ENCODE measurements at regions of chr11 and their contacts with region 1.

Region 1: DNA sequence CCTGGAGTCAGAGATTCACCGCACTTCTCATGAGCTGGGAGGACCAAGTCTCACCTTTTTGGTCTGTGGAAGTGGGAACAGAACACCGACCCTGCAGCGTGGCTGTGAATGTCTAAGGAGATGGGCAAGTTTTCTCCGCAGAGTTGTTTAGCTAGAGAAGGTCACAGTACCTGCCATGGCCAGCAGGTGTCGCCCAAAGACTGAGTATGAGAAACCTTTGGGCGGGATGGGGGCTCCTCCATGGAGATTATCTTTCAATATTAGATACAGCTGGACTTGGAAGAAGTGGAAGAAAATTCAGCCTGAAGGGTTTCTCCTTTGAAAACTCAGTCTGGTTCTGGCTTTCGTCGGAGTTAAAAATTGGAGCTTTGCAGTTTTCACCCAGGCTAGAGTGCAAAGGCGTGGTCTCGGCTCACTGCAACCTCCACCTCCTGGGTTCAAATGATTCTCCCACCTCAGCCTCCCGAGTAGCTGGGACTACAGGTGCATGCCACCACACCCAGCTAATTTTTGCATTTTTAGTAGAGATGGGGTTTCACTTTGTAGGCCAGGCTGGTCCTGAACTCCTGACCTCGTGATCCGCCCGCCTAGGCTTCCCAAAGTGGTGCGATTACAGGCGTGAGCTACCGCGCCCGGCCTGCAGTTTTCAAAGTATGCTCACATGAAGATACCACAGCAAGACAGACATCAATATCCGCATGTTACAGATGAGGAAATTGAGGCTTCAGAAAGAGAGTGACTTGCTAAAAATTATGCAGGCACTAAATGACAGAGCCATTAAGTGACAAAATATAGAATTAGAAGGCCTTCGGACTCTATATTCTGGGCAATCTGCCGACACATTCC is 10.7 kb upstream of the DSCAML1 start:
- DNase-seq: peak; percentile 48 to 54
- ATAC-seq: peak in 1 of 2 experiments; percentile 57; a peak in 3 of 6 replicates
- H3K4me3 ChIP-seq: no peak overlapping the region
- H3K27ac ChIP-seq: no peak overlapping the region; a peak in 1 of 6 replicates
- H3K4me1 ChIP-seq: peaks cover 13% of the 10 kb centered on the region; the same call in 2 of the 3 replicates
- CTCF ChIP-seq: peak; percentile 71
- EP300 ChIP-seq: no peak
- POLR2A ChIP-seq: no peak
- RAD21 ChIP-seq: peak; percentile 71 to 76

Region 2: DNA sequence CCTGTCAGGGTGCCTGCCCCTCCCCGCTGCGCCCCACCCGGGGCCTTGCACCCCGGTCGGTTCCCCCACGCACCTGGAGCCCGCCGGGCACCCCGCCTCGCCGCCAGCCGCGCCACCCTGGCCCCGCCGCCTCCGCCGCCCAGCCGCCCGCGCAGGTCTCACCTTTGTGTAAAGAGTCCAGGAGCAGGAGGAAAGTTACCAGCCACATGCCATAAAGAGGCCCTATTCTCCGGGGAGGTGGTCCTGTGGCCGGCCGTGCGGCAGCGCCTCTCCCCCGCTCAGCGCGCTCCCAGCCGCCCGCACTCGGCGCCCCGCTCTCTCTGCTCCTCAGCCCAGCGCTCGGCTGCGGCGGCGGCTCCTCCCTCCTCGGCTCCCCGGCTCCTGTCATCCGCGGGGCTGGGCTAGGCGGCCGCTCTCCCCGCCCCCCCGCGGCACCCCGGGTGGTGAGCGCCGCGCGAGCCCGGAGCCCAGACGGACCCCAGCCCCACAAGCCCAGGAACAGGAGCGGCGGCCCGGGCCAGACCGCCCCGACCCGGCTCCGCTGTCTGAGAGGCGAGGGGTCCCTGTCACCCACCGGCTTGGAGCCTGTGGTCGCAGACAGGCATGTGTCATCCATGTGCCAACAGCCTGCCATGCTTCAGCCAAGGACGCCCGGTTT is 10.7 kb before region 1 on chr11 and contains the start of gene DSCAML1:
- CTCF ChIA-PET with region 1: interaction called, 31 read pairs
- POLR2A ChIA-PET with region 1: no interaction called
- DNase-seq: peak in 1 of 2 experiments; percentile 53
- ATAC-seq: peak; percentile 70 to 91; a peak in 5 of 6 replicates
- H3K4me3 ChIP-seq: peak within 1 kb of the TSS; percentile 49
- H3K27ac ChIP-seq: peak within 1 kb of the TSS in 1 of 2 experiments; percentile 65; a peak in 2 of 6 replicates
- H3K4me1 ChIP-seq: no peaks in the 10 kb centered on the region
- CTCF ChIP-seq: no peak
- EP300 ChIP-seq: no peak
- POLR2A ChIP-seq: no peak
- RAD21 ChIP-seq: no peak
- polyA plus RNA-seq, gene DSCAML1: 0.22 and 0.31 TPM in 2 replicates

Region 3: DNA sequence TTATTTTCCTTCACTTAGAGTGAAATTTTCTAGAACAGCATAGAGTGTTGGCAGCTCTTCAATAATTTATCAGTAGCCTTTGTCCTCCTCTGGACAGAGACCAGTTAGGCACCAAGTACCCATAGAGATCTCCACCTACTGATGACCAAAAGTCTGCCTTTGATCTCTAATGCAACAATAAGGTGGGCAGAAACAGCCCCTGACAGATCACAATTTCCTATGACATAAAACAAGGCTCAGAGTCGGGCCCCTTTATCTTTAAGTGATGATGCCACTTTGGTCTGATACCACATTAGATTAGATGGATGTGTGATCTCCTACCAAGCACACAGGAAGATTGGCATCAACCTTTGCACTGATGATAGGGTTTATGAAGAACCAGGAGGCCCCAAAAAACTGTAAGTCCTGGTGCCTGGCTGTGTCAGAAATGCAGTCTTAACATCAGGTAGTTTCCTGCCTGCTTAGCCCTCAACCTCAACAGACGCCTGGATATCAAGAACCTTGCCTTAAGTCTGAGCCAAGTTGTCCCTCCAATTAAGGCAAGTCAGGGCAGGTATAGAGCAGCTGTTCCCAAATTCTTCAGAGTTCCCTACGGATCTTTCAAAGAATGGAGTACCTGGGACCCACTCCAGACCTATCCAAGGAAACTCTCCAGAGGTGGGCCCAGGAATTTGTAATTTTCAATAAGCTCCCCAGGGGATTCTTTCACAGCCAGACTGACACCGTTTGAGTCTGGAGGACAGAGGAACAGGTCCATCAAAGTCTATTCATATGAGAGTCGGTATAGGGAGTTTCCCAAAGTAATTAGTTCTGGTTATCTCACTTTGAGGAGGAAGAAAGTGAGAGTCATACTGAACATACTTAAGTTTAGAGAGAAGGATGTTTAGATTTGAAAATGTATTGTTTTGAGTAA is 238.6 kb after region 1 on chr11:
- CTCF ChIA-PET with region 1: interaction called, 10 read pairs
- POLR2A ChIA-PET with region 1: no interaction called
- DNase-seq: no peak
- ATAC-seq: no peak
- H3K4me3 ChIP-seq: no peak overlapping the region
- H3K27ac ChIP-seq: no peak overlapping the region
- H3K4me1 ChIP-seq: 0 out of 3 replicates have a peak, but pooled peaks cover 4% of the 10 kb centered on the region
- CTCF ChIP-seq: no peak
- EP300 ChIP-seq: no peak
- POLR2A ChIP-seq: no peak
- RAD21 ChIP-seq: no peak

Measured in A549 (cell line).